Right ventricle myocardium inferior (tissue), 1 donor: ENCODE measurements at regions of chr19 and their contacts with region 1.

Region 1: DNA sequence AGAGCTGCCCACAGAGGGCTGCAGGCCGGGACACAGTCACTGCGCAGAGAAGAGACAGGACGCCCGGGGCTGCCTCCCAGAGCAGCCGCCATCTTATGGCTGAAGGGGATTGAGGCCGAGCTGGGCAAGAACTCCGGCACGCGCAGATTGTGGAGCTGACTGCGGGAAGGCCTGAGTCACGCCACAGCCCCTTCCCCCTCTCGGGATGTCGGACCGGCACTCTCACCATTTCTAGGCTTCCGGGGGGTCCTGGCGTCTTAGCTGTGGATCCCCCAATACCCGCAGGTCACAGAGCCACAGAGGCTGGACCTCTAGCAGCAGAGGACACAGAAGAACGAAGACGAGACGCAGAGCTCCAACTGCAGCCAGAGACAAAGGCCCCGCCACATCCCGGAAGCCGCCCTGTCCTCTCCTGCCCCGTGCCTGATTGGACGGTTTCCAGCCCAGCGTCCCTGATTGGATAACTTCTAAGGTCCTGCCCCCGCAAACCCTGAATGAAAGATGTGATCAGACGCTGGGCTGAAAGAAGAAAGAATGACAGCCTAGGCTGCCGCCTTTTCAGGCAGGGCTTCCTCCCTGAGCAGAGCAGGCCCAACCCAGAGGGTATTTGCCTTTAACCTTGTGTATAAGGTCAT is at the start of gene ZNF43:
- DNase-seq: peak; percentile 97
- ATAC-seq: peak; percentile 100
- total RNA-seq, gene ZNF43: 5.2 TPM

Region 2: DNA sequence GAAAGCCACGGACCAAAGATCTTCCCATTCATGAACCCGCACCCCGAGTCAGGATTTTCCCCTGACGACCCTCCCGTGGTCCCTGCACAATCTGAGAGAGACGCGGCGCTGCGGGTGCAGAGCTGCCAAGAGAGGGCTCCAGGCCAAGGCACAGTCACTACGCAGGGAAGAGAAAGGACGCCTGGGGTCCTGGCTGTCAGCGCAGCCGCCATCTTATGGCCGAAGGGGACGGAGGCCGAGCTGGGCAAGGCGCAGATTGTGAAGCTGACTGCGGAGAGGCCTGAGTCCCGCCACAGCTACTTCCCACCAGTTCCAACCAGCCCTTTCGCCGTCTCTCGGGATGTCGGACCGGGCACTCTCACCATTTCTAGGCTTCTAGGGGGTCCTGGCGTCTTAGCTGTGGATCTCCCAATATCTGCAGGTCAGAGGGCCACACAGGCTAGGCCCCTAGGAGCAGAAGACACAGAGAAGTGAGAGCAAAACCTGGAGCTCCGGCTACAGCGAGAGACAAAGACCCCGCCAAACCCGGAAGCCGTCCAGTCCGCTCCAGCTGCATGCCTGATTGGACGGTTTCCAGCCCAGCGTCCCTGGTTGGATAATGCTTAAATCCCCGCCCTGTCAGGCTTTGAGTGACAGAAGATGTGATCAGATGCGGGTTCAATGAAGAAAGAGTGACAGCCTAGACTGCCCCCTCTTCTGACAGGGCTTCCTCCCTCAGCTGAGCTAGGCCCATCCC is 68.7 kb before region 1 on chr19 and contains the start of gene ZNF100:
- intact Hi-C with region 1: loop called (anchors 2 kb)
- DNase-seq: peak; percentile 95
- ATAC-seq: peak; percentile 97
- total RNA-seq, gene ZNF100: 7.0 TPM